ENCODE measurements at regions of chr18 and their contacts with region 1.

Region 1: DNA sequence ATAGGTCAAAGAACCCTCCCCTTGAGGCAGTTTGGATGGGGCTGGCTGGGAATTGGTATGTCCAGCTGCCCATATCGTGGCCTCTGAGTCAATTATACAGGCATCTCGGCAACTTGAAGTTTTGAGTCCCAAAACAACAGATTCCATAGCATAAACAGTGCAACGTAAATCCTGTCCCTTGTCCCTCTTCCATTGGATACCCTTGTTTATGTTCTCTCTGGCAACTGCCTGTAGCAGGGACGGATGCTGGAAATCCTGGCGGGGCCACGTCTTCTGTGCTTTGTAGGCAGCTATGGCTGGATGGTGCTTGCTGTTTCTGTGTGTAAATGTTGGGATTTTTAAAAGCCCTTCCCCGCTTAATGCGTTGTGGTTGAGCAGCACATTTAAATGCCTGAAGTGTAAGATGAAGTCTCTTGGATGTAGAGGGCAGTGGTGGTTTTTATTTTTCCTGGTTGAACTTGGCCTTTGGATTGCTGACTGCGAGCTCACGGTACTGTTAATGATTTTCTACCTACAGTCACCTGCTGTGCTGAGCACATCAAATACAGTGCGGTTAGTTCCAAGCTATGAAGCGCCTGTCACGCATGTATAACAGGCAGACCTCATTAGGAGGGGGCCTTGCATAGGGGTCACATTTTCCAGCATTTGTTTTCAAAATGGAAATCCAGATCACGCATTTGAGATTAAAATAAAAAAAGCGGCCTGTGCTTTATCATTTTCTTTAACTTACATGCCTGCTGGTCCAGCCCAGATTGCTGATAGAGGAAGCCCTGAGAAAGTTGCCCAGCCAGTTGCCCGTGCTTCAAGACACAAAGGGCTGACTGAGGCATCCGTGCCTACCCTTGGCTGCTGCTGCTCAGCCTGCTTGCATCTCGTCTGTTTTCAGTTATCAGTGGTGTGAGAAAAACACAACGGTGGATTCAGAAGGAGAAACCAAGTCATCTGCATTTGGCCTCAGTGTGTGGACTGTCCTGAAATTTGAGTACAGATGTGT is 84.7 kb downstream of the NEDD4L start:
- DNase-seq: peak; percentile 80 to 89
- H3K4me3 ChIP-seq: no peak overlapping the region
- H3K27ac ChIP-seq: peak overlapping the region; percentile 46 to 78 (median 76)
- H3K4me1 ChIP-seq: peaks cover 14 to 20% (median 16%) of the 10 kb centered on the region in 4 donors
- H3K27me3 ChIP-seq: no peaks in the 10 kb centered on the region
- CTCF ChIP-seq: peak in 1 of 7 experiments; percentile 31
- EP300 ChIP-seq: no peak
- POLR2A ChIP-seq: no peak

Region 2: DNA sequence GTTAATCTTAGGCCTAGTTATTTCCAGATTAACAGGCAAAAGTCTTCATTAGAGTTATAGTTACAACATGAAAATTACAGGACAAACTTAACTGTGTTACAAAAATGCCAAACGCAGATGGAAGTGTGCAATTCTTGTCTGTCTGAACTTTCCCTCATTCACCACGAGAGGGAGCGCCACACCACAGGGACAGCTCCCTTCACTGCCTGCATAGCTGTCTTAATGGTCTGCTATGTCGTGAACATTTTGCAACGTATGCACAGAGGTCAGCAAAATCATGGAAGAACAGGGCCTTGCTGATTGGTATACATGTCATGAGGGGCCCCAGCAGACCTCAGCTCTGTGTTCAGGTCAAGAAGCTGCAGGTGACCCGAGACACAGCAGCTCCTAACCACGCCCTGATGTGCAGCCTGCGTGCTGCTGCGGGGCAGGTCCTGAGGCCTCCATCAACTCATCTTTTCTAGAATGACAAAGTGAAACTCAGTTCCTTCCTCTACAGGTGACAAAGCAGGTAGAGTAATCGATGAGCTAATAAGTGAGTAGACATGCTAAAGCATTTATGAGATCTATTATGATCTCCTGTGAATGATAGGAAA is 246.8 kb before region 1 on chr18:
- intact Hi-C with region 1: loop called (anchors 5 kb)
- DNase-seq: peak; percentile 76 to 94
- H3K4me3 ChIP-seq: no peak overlapping the region
- H3K27ac ChIP-seq: no peak overlapping the region
- H3K4me1 ChIP-seq: peaks cover 0 to 7% (median 2%) of the 10 kb centered on the region in 4 donors
- H3K27me3 ChIP-seq: no peaks in the 10 kb centered on the region
- CTCF ChIP-seq: peak in 5 of 7 experiments; percentile 78 to 88 (median 84)
- EP300 ChIP-seq: no peak
- POLR2A ChIP-seq: no peak

Region 3: GRCh38 chr18:58043491-58044379 is 84.9 kb before region 1 on chr18 and contains the start of gene NEDD4L:
- intact Hi-C with region 1: loop called (anchors 10 kb)
- DNase-seq: peak; percentile 89 to 96
- H3K4me3 ChIP-seq: peak within 1 kb of the TSS; percentile 61 to 94 (median 90)
- H3K27ac ChIP-seq: peak within 1 kb of the TSS; percentile 83 to 97 (median 95)
- H3K4me1 ChIP-seq: peaks cover 9 to 50% (median 33%) of the 10 kb centered on the region in 4 donors
- H3K27me3 ChIP-seq: peaks cover 0 to 7% (median 0%) of the 10 kb centered on the region in 3 donors
- CTCF ChIP-seq: peak in 5 of 7 experiments; percentile 73 to 91 (median 84)
- EP300 ChIP-seq: no peak
- POLR2A ChIP-seq: no peak
- total RNA-seq, gene NEDD4L: 109 to 315 (median 197) TPM

Measured in stomach (tissue), 19 donors.